HepG2 (cell line): ENCODE measurements at regions of chr14 and their contacts with region 1.

Region 1: DNA sequence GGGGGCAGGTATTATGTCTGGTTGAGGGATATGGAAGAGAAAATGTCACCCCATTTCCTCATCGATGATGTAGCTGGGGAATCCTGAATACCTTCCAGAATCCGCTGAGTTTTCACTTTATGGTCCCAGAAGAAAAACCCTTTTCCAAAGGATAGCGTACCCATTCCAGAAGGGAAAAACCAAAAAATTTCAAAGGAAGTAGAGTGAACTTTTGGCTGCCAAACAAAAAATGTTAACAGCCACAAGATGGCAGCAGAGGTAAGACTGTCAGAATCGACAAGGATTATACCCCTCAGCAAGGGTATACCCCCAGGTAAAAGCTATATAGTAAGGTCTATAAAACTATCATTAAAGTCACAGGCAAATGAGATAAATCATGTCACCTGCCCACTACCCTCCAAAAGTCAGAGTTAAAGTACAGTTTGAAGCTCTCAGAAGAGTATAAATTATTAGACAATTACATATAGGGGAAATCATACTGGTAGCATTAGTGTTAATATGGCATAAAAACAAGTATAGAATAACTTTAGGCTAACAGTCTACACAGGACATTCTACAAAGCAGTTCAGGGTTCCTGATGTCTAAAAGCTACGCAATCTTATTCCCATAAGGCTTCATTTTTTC is 18.0 kb downstream of the ACIN1 start:
- DNase-seq: peak; percentile 68
- ATAC-seq: peak; percentile 57
- H3K4me3 ChIP-seq: no peak overlapping the region
- H3K27ac ChIP-seq: no peak overlapping the region
- H3K4me1 ChIP-seq: peaks cover 9% of the 10 kb centered on the region
- H3K27me3 ChIP-seq: no peaks in the 10 kb centered on the region
- CTCF ChIP-seq: peak; percentile 70
- EP300 ChIP-seq: no peak
- POLR2A ChIP-seq: no peak
- RAD21 ChIP-seq: no peak

Region 2: GRCh38 chr14:23109769-23110168 is 32.9 kb after region 1 on chr14:
- CTCF ChIA-PET with region 1: interaction called, 10 read pairs
- POLR2A ChIA-PET with region 1: interaction called, 8 read pairs
- in situ Hi-C with region 1: no loop called
- intact Hi-C with region 1: loop called (anchors 1 kb)
- DNase-seq: no peak
- ATAC-seq: no peak
- H3K4me3 ChIP-seq: no peak overlapping the region
- H3K27ac ChIP-seq: no peak overlapping the region
- H3K4me1 ChIP-seq: peaks cover 41% of the 10 kb centered on the region
- H3K27me3 ChIP-seq: peaks cover 22 to 58% of the 10 kb centered on the region in 2 experiments
- CTCF ChIP-seq: no peak
- EP300 ChIP-seq: no peak
- POLR2A ChIP-seq: no peak
- RAD21 ChIP-seq: no peak

Region 3: GRCh38 chr14:23186913-23187654 is 110.2 kb after region 1 on chr14:
- CTCF ChIA-PET with region 1: interaction called, 34 read pairs
- POLR2A ChIA-PET with region 1: no interaction called
- in situ Hi-C with region 1: no loop called
- intact Hi-C with region 1: no loop called
- DNase-seq: peak; percentile 78
- ATAC-seq: peak; percentile 89
- H3K4me3 ChIP-seq: no peak overlapping the region
- H3K27ac ChIP-seq: no peak overlapping the region
- H3K4me1 ChIP-seq: peaks cover 12% of the 10 kb centered on the region
- H3K27me3 ChIP-seq: peaks cover 2 to 34% of the 10 kb centered on the region in 2 experiments
- CTCF ChIP-seq: peak; percentile 94
- EP300 ChIP-seq: no peak
- POLR2A ChIP-seq: no peak
- RAD21 ChIP-seq: peak; percentile 93